Activated CD8-positive, alpha-beta T cell treated with anti-CD3 and anti-CD28 coated beads, Interleukin-2, amount 10 ng/mL, durations not matched to agents 7 days and 5 days (primary cell): ENCODE measurements at regions of chr5 and their contacts with region 1.

Region 1: GRCh38 chr5:134586866-134587524 is 45.6 kb downstream of the SAR1B start:
- DNase-seq: peak; percentile 88
- ATAC-seq: peak; percentile 95
- H3K4me3 Mint-ChIP-seq: no peak overlapping the region
- H3K27ac Mint-ChIP-seq: peak overlapping the region; percentile 62
- H3K4me1 Mint-ChIP-seq: peaks cover 17% of the 10 kb centered on the region
- H3K27me3 Mint-ChIP-seq: no peaks in the 10 kb centered on the region

Region 2: DNA sequence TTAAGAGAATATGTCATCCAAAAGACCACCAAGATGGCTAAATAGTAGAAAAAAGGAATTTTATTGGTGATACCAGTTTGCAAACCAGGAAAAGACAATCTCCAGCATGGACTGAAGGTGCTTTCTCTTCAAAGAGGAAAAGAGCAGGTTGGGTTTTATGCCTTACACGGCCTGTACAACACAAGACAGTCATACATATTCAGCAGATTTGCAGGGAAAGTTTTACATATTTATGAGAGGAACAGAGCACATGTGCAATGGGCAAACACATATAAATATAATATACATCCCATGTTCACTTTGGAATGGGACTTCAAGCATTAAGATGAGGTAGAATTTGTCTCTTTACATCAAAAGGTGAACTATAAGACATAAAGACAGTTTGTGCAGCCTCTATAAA is 290.8 kb before region 1 on chr5:
- CTCF ChIA-PET with region 1: interaction called, 25 read pairs
- POLR2A ChIA-PET with region 1: no interaction called
- DNase-seq: no peak
- ATAC-seq: no peak
- H3K4me3 Mint-ChIP-seq: no peak overlapping the region
- H3K27ac Mint-ChIP-seq: no peak overlapping the region
- H3K4me1 Mint-ChIP-seq: no peaks in the 10 kb centered on the region
- H3K27me3 Mint-ChIP-seq: peaks cover 6% of the 10 kb centered on the region

Region 3: DNA sequence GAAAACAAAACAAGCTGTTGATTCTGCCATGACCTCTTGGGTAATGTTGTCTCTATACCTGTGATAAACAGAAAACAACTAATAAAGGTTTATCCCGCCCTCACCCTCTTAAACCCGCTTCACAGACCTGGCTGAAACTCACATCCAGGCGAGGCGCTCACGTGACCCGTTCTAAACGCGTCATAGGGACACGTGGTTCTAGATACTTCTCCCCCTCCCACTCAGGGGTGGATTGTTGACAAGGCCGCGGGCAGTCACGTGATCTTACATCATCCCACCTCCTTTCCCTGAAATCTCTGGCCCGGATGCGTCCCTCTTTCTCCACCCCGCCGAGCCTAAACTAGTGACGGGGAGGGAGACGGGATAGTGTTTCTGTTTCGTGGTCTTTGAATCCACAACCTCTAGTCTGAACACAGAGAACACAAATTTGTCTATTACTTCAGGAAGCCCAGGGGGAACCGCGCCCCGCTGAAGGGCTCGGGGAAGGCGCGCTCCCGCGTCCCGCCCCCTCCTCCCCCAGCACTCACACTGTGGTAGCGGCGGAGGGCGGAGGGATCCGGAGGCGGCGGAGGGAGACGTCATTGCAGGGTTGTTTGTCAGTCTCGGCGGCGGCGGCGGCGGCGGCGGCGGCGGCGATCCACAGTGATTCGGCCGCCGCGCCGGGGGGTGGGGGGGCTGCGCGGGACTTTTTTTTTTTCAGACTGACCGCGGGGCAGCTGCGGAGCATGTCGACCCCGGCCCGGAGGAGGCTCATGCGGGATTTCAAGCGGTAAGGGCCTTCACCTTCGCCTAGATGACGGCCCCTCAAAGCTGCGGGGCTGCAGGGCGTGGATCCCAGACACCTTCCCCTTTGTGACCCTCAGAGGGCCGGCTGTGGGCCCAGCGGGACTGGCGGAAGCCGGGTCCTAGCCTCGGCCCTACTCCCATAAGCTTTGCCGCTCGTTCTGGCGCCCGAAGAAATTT is 215.8 kb before region 1 on chr5 and contains the start of gene UBE2B:
- CTCF ChIA-PET with region 1: interaction called, 18 read pairs
- POLR2A ChIA-PET with region 1: no interaction called
- DNase-seq: peak; percentile 99
- ATAC-seq: peak; percentile 73
- H3K4me3 Mint-ChIP-seq: peak within 1 kb of the TSS; percentile 99
- H3K27ac Mint-ChIP-seq: peak within 1 kb of the TSS; percentile 100
- H3K4me1 Mint-ChIP-seq: peaks cover 46% of the 10 kb centered on the region
- H3K27me3 Mint-ChIP-seq: no peaks in the 10 kb centered on the region
- total RNA-seq, gene UBE2B: 83.0 to 87.6 TPM

Region 4: DNA sequence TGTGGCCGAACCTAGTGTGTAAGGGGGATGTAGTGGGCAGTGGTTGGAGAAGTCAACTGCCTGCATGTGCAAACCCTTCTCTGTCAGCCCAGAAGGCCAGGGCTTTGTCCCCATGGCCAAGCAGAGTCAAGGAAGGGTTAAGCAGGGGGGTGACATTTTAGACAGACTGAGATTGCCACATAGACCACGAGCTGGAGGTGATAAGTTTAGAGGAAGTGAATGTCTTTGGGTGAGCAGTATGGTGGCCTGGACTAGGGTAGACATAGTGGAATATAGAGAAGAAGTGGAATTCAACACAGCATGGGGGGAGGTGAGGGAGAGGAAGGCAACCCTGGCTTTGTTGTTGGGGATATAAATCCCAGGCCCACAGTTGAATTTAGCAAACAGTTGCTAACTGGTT is 136.6 kb before region 1 on chr5:
- CTCF ChIA-PET with region 1: no interaction called
- POLR2A ChIA-PET with region 1: no interaction called
- DNase-seq: no peak
- ATAC-seq: no peak
- H3K4me3 Mint-ChIP-seq: no peak overlapping the region
- H3K27ac Mint-ChIP-seq: no peak overlapping the region
- H3K4me1 Mint-ChIP-seq: peaks cover 4% of the 10 kb centered on the region
- H3K27me3 Mint-ChIP-seq: peaks cover 4% of the 10 kb centered on the region

Region 5: GRCh38 chr5:134465816-134466240 is 121.2 kb before region 1 on chr5:
- CTCF ChIA-PET with region 1: interaction called, 15 read pairs
- POLR2A ChIA-PET with region 1: no interaction called
- DNase-seq: peak; percentile 59
- ATAC-seq: peak; percentile 85
- H3K4me3 Mint-ChIP-seq: peak overlapping the region; percentile 76
- H3K27ac Mint-ChIP-seq: peak overlapping the region; percentile 80
- H3K4me1 Mint-ChIP-seq: peaks cover 22% of the 10 kb centered on the region
- H3K27me3 Mint-ChIP-seq: peaks cover 4% of the 10 kb centered on the region

Region 6: GRCh38 chr5:134603059-134603458 is 16.1 kb after region 1 on chr5:
- CTCF ChIA-PET with region 1: interaction called, 76 read pairs
- POLR2A ChIA-PET with region 1: no interaction called
- DNase-seq: no peak
- ATAC-seq: no peak
- H3K4me3 Mint-ChIP-seq: no peak overlapping the region
- H3K27ac Mint-ChIP-seq: no peak overlapping the region
- H3K4me1 Mint-ChIP-seq: peaks cover 28% of the 10 kb centered on the region
- H3K27me3 Mint-ChIP-seq: no peaks in the 10 kb centered on the region

Region 7: DNA sequence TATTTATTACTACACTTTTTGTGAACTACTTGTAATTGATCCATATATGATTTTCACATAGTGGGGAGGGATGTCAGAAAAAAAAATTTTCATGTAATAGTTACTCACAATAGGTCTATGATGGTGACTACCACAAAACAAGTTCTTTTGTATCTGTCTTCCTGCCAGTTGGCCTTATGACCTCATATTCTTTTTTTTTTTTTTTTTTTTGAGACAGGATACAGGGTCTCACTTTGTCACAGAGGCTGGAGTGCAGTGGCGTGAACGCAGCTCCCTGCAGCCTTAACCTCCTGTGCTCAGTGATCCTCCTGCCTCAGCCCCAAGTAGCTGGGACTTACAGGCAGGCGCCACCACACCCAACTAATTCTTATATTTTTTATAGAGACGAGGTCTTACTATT is 72.5 kb after region 1 on chr5:
- CTCF ChIA-PET with region 1: interaction called, 16 read pairs
- POLR2A ChIA-PET with region 1: no interaction called
- DNase-seq: no peak
- ATAC-seq: peak; percentile 44
- H3K4me3 Mint-ChIP-seq: no peak overlapping the region
- H3K27ac Mint-ChIP-seq: peak overlapping the region; percentile 7
- H3K4me1 Mint-ChIP-seq: peaks cover 11% of the 10 kb centered on the region
- H3K27me3 Mint-ChIP-seq: no peaks in the 10 kb centered on the region